Dorsolateral prefrontal cortex (tissue), 120 donors: ENCODE measurements at regions of chr2 and their contacts with region 1.

Region 1: GRCh38 chr2:16617282-16618261 is 48.1 kb downstream of the CYRIA start:
- DNase-seq: peak in 1 of 10 donors; percentile 66
- H3K4me3 ChIP-seq: no peak overlapping the region
- H3K27ac ChIP-seq: peak overlapping the region; percentile 1 to 95 (median 87)
- H3K27me3 ChIP-seq: no peaks in the 10 kb centered on the region
- CTCF ChIP-seq: peak in 55 of 56 donors; percentile 29 to 73 (median 61)

Region 2: GRCh38 chr2:16429431-16430145 is 188.0 kb before region 1 on chr2:
- intact Hi-C with region 1: no loop called
- DNase-seq: no peak
- H3K4me3 ChIP-seq: no peak overlapping the region
- H3K27ac ChIP-seq: no peak overlapping the region
- H3K27me3 ChIP-seq: peaks cover 0 to 9% (median 0%) of the 10 kb centered on the region in 45 donors
- CTCF ChIP-seq: no peak

Region 3: DNA sequence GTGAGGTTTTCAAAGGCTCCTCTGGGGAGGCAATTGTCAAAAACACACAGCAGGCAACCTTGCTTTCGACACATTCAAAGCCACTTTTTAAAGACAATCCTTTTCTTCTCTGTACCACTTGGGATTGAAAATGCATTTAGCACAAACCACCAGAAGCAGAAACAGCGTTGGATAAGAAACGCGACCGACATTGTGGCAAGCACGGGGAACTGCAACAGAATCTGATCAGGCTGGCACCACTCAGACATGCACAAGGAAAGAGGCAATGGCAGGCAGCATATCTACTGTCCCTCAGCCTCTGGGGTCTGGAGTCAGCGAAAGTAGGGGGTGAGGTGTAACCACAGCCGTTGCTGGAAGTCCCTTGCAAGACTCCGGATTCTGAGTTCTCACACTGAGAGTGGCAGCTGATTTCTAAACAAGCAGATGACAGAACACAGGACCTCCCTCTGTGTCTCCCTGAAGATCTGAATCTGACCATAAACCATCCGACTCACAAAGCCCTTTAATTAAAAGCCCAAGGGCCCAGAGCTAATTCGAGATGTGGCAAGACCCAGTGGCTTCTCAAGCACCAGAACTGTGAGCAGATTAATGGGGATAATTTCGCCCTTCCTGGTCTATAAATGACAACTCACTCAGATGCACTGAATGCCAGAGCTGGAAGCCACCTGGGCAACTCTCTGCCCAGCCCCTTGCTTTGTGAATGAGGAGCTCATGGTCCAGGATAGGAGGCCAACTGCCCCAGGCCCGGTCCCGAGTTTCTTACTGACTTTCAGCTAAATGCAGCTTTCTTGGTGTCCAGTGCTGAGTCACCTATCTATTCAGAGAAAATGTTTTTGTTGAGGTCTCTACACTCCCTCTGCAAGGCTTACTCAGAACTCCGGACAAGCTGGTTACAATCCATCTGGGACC is 18.5 kb after region 1 on chr2:
- intact Hi-C with region 1: loop called in 1 of 2 experiments (anchors 2 kb)
- DNase-seq: peak in 5 of 10 donors; percentile 46 to 71 (median 65)
- H3K4me3 ChIP-seq: peak overlapping the region in 39 of 59 donors; percentile 0 to 50 (median 28)
- H3K27ac ChIP-seq: peak overlapping the region in 53 of 59 donors; percentile 0 to 81 (median 61)
- H3K27me3 ChIP-seq: no peaks in the 10 kb centered on the region
- CTCF ChIP-seq: peak in 38 of 56 donors; percentile 7 to 51 (median 34)

Region 4: DNA sequence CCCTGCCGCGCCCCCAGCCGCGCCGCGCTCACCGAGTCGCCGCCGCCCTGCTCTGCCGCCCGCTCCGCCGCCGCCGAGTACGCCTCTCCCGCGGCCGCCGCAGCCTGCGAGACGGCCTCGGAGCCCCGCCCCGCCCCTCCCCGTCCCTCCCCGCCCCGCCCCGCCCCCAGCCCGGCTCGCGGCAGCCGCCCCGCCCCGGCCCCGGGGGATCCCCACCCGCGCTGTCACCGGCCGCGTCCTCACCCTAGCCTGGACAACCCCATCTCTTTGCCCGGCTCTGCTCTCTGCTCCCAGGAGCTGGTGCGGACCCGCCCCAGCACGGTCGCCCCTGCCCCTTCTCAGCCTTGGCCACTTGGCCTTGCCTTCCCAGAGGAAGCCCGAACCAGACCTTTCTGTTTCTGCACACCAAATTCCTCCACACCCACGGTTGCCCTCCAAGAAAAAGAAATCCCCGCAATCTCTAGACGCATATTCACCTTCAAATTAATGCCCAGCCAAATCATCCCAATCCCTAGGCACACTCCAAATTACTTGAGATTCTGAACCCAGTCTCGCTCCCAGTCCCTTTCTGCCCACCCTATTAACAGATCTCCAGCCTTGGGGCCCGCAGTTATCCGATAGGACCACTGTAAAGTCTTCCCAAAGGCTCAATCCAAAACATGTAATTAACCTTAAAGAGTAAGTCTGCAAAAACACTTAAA is 48.3 kb after region 1 on chr2 and contains the start of gene CYRIA:
- intact Hi-C with region 1: loop called (anchors 2 to 5 kb)
- DNase-seq: peak in 7 of 10 donors; percentile 45 to 80 (median 59)
- H3K4me3 ChIP-seq: peak within 1 kb of the TSS; percentile 50 to 89 (median 75)
- H3K27ac ChIP-seq: peak within 1 kb of the TSS in 58 of 59 donors; percentile 38 to 91 (median 83)
- H3K27me3 ChIP-seq: no peaks in the 10 kb centered on the region
- CTCF ChIP-seq: no peak
- total RNA-seq, gene CYRIA: 53.2 to 194 (median 131) TPM

Region 5: GRCh38 chr2:16756831-16757644 is 139.5 kb after region 1 on chr2:
- intact Hi-C with region 1: loop called (anchors 2 kb)
- DNase-seq: peak; percentile 74 to 91 (median 86)
- H3K4me3 ChIP-seq: peak overlapping the region in 1 of 59 donors; percentile 37
- H3K27ac ChIP-seq: peak overlapping the region in 34 of 59 donors; percentile 13 to 77 (median 56)
- H3K27me3 ChIP-seq: no peaks in the 10 kb centered on the region
- CTCF ChIP-seq: peak; percentile 88 to 98 (median 94)